PC-3 (cell line): ENCODE measurements at regions of chr18 and their contacts with region 1.

Region 1: DNA sequence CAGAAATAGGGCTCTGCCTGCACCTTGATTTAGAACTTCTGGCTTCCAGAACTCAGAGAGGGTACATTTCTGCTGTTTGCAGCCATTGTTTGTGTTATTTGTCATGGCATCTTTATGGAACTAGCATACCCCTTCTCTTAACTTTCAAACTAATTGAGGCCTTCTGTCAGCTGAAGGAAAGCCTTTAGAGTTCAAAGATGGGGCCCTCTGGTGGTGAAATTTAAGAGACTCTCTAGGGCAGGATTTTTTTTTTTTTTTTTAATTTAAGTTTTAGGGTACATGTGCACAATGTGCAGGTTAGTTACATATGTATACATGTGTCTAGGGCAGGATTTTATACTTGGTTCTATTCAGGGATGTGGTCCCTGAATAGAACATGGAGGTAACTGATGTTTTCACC is 260.6 kb upstream of the LINC00305 start:
- DNase-seq: peak; percentile 50
- ATAC-seq: peak; percentile 31; the same call in 1 of the 2 replicates
- H3K4me3 ChIP-seq: no peak overlapping the region
- H3K27ac ChIP-seq: no peak overlapping the region
- H3K4me1 ChIP-seq: no peaks in the 10 kb centered on the region
- H3K27me3 ChIP-seq: no peaks in the 10 kb centered on the region
- CTCF ChIP-seq: peak; percentile 64

Region 2: DNA sequence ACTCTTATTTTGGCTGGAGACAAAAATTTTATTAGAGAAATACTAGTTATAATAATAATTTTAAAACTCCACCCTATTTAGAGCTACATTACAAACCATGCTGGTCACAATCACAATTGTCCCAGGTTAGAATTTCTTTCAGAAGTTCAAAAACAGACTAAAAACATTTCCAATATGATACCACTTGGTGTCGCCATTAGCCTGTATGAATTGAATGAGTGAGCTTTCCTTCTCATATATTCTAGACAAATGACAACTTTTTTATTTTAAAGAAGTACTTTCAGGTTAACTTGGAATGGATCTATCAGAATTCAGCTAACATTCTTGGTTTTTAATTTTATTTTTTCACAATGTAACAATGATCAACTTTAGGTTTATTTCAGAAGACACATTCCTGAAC is 391.6 kb before region 1 on chr18:
- CTCF ChIA-PET with region 1: no interaction called
- POLR2A ChIA-PET with region 1: no interaction called
- intact Hi-C with region 1: loop called (anchors 2 kb)
- DNase-seq: peak; percentile 60
- ATAC-seq: peak; percentile 46; the same call in 1 of the 2 replicates
- H3K4me3 ChIP-seq: no peak overlapping the region
- H3K27ac ChIP-seq: no peak overlapping the region
- H3K4me1 ChIP-seq: no peaks in the 10 kb centered on the region
- H3K27me3 ChIP-seq: peaks cover 37% of the 10 kb centered on the region
- CTCF ChIP-seq: peak; percentile 70

Region 3: GRCh38 chr18:64037812-64038414 is 371.6 kb before region 1 on chr18:
- CTCF ChIA-PET with region 1: no interaction called
- POLR2A ChIA-PET with region 1: no interaction called
- intact Hi-C with region 1: loop called (anchors 5 kb)
- DNase-seq: peak; percentile 74
- ATAC-seq: peak; percentile 46; the same call in 1 of the 2 replicates
- H3K4me3 ChIP-seq: no peak overlapping the region
- H3K27ac ChIP-seq: no peak overlapping the region
- H3K4me1 ChIP-seq: no peaks in the 10 kb centered on the region
- H3K27me3 ChIP-seq: peaks cover 25% of the 10 kb centered on the region
- CTCF ChIP-seq: peak; percentile 82

Region 4: DNA sequence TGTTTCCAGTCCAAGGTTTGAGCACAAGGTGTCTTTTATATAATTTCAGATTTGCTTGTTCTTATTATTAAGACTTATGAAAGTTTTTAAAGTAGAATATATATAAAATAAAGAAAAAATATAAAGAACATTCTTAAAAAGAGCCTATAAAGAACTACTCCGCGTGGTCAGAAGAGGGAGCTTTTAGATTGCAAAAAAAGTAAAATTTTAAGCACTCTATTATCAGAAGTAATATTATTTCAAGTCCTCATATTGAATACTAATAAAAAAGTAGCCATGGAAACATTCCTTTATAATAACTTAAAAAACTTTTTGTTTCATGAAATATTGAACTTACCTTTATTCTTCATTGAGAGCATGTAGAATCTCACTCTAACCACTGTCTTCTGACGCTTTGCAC is 312.0 kb before region 1 on chr18:
- CTCF ChIA-PET with region 1: no interaction called
- POLR2A ChIA-PET with region 1: no interaction called
- intact Hi-C with region 1: loop called (anchors 5 kb)
- DNase-seq: peak; percentile 16
- ATAC-seq: no peak
- H3K4me3 ChIP-seq: no peak overlapping the region
- H3K27ac ChIP-seq: no peak overlapping the region
- H3K4me1 ChIP-seq: no peaks in the 10 kb centered on the region
- H3K27me3 ChIP-seq: peaks cover 20% of the 10 kb centered on the region
- CTCF ChIP-seq: peak; percentile 39

Region 5: DNA sequence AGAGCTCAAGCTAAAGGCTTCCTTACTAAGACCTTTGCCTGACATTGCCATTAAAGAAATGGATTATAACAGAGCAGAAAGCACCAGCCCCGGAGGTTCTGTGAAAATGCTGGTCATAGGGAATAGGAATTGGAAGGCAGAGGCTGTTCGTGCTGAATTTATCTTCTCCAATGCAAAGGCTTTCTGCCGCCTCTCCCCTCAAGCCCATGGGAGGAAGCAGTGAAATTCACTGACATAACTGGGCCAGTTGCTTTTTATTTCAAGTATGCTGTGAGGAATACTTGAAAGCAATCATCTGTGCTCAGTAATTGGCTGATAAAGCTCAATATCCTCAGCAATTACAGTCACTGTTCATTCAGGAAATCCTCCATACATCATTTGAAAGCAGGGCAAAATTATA is 175.2 kb before region 1 on chr18:
- CTCF ChIA-PET with region 1: no interaction called
- POLR2A ChIA-PET with region 1: no interaction called
- intact Hi-C with region 1: no loop called
- DNase-seq: no peak
- ATAC-seq: no peak
- H3K4me3 ChIP-seq: no peak overlapping the region
- H3K27ac ChIP-seq: no peak overlapping the region
- H3K4me1 ChIP-seq: no peaks in the 10 kb centered on the region
- H3K27me3 ChIP-seq: peaks cover 4% of the 10 kb centered on the region
- CTCF ChIP-seq: no peak

Region 6: DNA sequence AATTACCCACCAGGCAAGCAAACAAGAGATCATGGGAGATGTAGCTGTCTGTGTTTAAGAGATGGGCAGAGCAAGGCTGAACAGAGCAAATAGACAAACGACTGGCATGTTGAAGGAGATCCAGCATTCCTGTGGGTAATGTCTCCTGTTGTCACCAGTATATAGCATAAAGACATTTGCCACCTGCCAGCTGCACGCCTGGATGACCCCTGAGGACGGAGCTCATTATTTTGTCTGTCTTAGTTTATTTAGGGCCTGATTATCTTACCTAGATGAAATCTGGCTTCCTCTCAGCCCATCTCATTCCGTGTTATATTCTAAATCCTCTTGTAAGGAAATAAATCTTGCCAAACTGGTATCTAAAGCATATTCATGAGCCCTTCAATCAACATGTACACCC is 249.7 kb after region 1 on chr18:
- CTCF ChIA-PET with region 1: no interaction called
- POLR2A ChIA-PET with region 1: no interaction called
- intact Hi-C with region 1: no loop called
- DNase-seq: no peak
- ATAC-seq: no peak
- H3K4me3 ChIP-seq: no peak overlapping the region
- H3K27ac ChIP-seq: no peak overlapping the region
- H3K4me1 ChIP-seq: no peaks in the 10 kb centered on the region
- H3K27me3 ChIP-seq: no peaks in the 10 kb centered on the region
- CTCF ChIP-seq: no peak